Activated T-helper 2 cell treated with anti-CD3 and anti-CD28 coated beads, Interferon-gamma antibody, Interleukin-2, Interleukin-4, amounts not matched to agents 10 μg/mL and 5 μg/mL and 100 μg/mL, durations not matched to agents 14 hours and 24 hours and 36 hours (primary cell): ENCODE measurements at regions of chr7 and their contacts with region 1.

Region 1: DNA sequence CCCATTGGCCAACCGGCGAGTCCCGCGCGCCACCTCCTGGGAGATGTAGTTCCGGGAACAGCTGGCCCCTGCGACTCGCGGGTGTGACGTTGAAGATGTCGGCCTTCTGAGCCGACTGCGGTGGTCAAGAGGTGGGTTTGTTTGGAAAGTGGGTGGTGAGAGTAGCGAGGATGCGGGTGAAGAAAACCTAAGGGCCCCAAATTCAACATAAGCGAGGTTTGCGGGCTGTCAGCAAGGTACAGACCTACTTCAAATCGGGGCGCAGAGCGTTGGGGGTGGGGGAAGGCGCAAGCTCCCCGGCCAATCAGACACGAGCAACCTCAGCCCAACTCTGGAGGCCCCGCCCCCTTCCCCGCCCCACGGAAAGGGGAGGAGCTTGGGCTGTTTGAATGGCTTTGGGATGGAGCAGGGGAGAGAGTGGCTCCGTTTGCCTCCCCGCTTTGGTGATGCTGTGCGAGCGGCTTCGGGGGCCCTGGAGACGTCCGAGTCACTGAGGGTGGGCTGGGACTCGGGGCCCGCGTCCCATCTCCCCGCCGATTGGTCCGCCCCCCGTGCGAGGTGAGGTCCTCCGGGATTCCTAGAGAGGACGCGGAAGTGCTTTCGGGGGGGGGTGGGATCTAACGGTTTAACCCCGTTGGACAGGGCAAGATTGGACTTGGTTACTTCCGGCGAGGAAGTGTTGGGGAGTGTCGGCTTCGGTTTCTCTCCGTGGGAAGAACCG is at the start of gene ZKSCAN5:
- DNase-seq: peak; percentile 95
- H3K4me3 Mint-ChIP-seq: peak within 1 kb of the TSS; percentile 100
- H3K27ac Mint-ChIP-seq: peak within 1 kb of the TSS; percentile 100
- H3K4me1 Mint-ChIP-seq: peaks cover 24% of the 10 kb centered on the region
- H3K27me3 Mint-ChIP-seq: no peaks in the 10 kb centered on the region
- total RNA-seq, gene ZKSCAN5: 8.2 and 8.4 TPM in 2 replicates

Region 2: DNA sequence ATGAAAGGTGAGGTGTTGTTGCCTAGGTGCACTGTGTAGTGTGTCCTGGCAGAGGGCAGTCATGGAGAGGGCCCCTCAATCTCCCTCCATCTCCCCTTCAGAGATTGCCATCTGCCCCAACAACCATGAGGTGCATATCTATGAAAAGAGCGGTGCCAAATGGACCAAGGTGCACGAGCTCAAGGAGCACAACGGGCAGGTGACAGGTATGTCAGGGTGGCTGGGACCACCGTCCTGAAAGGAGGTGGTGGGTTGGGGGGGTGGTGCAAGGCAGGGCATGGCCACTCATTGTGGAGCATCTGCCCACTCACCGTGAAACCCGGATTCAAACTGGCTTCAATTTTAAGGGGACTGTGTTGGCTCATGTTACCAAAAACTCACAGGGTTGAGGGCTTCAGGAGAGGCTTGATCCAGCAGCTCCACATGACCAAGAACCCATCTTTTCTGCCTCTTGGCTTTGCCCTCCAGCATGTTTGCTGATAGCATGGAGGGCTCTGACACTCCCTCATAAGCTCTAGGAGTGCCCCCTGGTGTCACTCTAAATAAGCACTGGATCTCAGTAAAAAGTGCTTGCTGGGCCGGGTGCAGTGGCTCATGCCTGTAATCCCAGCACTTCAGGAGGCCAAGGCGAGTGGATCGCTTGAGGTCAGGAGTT is 118.1 kb before region 1 on chr7:
- intact Hi-C with region 1: no loop called
- DNase-seq: no peak
- H3K4me3 Mint-ChIP-seq: no peak overlapping the region
- H3K27ac Mint-ChIP-seq: peak overlapping the region; percentile 50
- H3K4me1 Mint-ChIP-seq: peaks cover 9% of the 10 kb centered on the region
- H3K27me3 Mint-ChIP-seq: no peaks in the 10 kb centered on the region

Region 3: DNA sequence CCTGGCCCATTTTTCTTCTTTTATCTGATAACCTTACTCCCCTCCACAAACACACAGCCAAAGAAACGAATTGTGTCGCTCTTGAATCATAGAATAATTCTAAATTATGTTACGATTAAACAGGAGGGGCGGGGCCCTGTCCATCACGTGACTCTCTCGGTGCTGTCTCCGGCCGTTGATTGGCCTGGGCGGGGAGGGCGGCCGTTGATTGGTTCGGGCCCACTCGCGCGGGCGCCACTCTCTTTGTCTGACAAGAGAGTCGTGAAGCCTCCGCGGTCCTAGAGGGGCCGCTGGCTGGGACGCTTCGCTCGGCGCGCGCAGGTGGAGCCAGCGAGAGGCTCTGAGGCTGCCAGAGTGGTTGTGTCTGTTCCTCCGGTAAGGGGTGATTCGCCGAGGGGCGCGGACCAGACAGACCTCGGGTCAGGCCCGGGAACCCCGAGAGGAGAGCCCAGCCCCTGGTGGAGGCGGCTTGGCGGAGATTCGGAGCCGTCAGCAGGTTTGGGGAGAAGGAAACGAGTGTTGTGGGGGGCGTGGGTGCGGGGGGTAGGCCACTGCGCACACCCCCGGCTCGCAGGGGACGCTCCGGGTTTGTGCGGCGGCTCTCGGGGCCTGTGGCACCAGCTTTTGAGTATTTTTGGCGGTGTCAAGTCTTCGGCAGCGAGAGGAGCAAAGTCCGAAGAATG is 32.1 kb before region 1 on chr7 and contains the start of gene ZNF789:
- intact Hi-C with region 1: loop called (anchors 1 kb)
- DNase-seq: peak; percentile 96
- H3K4me3 Mint-ChIP-seq: peak within 1 kb of the TSS; percentile 96
- H3K27ac Mint-ChIP-seq: peak within 1 kb of the TSS; percentile 91
- H3K4me1 Mint-ChIP-seq: peaks cover 20% of the 10 kb centered on the region
- H3K27me3 Mint-ChIP-seq: peaks cover 2% of the 10 kb centered on the region
- total RNA-seq, gene ZNF789: 23.2 and 24.3 TPM in 2 replicates

Region 4: DNA sequence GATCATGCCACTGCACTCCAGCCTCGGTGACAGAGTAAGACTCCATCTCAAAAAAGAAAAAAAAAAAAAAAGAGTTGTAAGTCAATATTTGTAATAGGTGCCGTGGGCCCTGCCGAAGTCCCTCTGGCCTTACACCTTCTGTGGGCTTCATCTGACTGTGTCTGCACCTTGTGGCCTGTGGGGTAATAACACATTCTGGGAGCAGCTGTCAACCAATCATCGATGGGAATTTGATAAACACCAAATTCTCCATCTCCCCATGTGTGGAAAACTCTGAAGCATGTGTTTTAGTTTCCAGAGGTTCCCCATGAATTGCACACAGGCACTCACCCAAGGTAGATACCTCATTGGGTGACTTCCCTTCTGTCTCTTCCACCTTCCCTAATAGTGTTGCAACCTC is 15.5 kb before region 1 on chr7:
- intact Hi-C with region 1: no loop called
- DNase-seq: no peak
- H3K4me3 Mint-ChIP-seq: no peak overlapping the region
- H3K27ac Mint-ChIP-seq: no peak overlapping the region
- H3K4me1 Mint-ChIP-seq: peaks cover 2% of the 10 kb centered on the region
- H3K27me3 Mint-ChIP-seq: no peaks in the 10 kb centered on the region

Region 5: DNA sequence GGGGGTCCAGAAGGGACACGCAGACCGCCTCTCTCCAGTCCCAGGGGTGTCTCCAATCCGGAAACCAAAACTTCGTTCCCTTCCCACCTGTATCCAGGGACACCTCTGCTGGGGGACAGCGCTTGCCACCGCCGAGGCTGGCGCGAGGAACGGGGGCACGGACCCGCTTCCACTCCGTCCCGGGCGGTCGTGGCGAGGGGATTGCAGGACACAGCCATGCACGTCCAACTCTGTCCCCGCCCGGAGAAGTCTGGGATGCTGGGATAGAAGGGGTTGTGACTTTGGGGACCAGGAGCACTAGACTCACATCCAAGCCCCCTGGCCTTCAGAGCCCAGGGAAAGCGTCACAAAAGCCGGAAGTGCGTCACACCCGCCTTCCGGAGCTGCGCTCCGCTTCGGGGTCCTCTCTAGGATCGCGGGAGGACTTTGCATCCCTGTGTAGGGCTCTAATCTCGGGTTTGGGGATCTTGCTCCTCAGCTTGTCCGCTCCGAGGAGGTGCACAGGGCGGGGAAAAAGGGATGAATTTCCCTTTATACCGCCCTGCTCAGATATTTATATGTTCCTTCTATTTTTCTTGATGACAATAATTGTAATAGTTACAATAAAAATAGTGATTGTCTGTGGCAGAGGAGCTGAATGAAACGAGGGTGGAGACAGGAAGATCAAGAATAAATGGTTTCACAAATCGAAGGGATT is 47.2 kb after region 1 on chr7 and contains the start of gene FAM200A:
- intact Hi-C with region 1: loop called (anchors 1 kb)
- DNase-seq: peak; percentile 75
- H3K4me3 Mint-ChIP-seq: peak within 1 kb of the TSS; percentile 90
- H3K27ac Mint-ChIP-seq: peak within 1 kb of the TSS; percentile 87
- H3K4me1 Mint-ChIP-seq: peaks cover 19% of the 10 kb centered on the region
- H3K27me3 Mint-ChIP-seq: no peaks in the 10 kb centered on the region
- total RNA-seq, gene FAM200A: 5.2 and 5.6 TPM in 2 replicates

Region 6: DNA sequence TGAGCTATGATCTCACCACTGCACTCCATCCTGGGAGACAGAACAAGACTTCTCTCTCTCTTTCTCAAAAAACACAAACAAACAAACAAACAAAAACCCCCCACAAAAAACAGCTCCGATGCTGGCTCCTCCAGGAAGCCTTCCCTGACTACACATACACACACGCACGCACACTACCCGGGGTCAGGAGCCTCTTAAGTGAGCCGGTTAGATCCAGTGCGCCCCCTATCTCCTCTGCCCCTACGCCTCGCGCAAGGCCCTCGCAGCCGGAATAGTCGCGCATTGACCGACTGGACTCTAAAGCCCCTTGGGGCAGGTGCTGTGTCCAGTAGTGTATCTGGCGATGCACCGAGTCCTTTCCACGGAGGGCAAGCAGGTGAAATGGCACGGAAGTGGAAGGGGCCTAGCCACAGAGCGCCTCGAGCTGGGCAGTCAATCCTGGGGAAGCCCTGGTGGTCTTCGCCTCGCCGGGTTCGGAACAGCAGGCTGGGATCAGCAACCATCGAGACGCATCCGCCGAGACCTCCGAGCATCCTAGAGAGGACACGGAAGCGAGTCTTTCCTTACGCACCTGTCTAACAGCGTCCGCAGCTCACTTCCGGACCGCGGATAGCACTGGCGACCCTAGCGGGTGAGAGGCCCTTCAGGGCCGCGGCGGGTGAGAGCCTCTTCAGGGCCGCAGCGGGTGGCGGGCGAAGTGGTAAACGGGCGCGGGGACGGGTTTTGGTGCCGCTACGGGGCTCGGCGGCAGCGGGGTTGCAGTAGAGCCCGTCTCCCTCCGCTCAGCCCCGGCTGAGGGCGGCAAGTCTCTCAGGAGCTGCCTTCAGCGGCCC is 111.8 kb after region 1 on chr7 and contains the start of gene ZSCAN25:
- intact Hi-C with region 1: loop called (anchors 1 kb)
- DNase-seq: peak; percentile 80
- H3K4me3 Mint-ChIP-seq: peak within 1 kb of the TSS; percentile 92
- H3K27ac Mint-ChIP-seq: peak within 1 kb of the TSS; percentile 91
- H3K4me1 Mint-ChIP-seq: peaks cover 39% of the 10 kb centered on the region
- H3K27me3 Mint-ChIP-seq: peaks cover 4% of the 10 kb centered on the region
- total RNA-seq, gene ZSCAN25: 31.2 and 31.7 TPM in 2 replicates